Activated CD4-positive, alpha-beta memory T cell treated with anti-CD3 and anti-CD28 coated beads, Interleukin-2, amount 10 ng/mL, durations not matched to agents 7 days and 5 days (primary cell): ENCODE measurements at regions of chr3 and their contacts with region 1.

Region 1: DNA sequence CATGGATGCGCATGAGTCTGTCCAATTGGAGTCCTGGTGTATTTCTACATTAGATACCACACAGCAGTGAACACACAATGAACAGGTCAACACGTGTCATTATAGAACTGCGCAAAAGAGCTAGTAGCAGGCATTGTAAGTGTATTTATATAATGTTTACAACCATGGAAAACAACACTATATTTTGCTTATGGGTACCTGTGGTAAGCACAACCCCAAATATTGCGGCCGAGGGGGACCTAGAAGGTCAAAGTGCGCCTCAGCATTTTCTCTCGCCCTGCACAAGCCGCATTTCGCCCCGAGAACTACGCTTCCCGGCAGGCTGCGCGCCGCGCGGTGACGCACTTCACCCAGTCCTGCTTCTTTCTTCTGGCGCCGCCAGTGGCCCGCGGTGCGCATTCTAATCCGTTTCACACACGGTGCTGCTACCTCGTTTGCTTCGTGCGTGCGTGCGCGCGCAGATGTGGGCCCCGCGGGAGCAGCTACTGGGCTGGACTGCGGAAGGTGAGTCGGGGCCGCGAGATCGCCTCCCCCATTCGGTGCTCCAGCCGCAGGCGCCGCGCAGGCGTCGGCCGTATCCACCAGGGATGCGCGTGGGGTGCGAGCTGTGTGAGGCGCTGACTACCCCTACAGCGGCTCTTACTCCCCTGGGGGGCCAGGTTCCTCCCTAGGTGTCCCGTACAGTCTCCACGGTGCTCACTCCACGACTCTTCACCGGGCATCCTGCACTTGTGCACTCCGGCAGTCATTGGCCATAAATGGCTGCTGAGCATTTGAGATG is at the start of gene ZNF589:
- DNase-seq: peak; percentile 96
- H3K4me3 Mint-ChIP-seq: peak within 1 kb of the TSS; percentile 84
- H3K27ac Mint-ChIP-seq: peak within 1 kb of the TSS; percentile 90
- H3K4me1 Mint-ChIP-seq: peaks cover 36% of the 10 kb centered on the region
- H3K27me3 Mint-ChIP-seq: no peaks in the 10 kb centered on the region
- total RNA-seq, gene ZNF589: 38.1 to 38.6 TPM

Region 2: DNA sequence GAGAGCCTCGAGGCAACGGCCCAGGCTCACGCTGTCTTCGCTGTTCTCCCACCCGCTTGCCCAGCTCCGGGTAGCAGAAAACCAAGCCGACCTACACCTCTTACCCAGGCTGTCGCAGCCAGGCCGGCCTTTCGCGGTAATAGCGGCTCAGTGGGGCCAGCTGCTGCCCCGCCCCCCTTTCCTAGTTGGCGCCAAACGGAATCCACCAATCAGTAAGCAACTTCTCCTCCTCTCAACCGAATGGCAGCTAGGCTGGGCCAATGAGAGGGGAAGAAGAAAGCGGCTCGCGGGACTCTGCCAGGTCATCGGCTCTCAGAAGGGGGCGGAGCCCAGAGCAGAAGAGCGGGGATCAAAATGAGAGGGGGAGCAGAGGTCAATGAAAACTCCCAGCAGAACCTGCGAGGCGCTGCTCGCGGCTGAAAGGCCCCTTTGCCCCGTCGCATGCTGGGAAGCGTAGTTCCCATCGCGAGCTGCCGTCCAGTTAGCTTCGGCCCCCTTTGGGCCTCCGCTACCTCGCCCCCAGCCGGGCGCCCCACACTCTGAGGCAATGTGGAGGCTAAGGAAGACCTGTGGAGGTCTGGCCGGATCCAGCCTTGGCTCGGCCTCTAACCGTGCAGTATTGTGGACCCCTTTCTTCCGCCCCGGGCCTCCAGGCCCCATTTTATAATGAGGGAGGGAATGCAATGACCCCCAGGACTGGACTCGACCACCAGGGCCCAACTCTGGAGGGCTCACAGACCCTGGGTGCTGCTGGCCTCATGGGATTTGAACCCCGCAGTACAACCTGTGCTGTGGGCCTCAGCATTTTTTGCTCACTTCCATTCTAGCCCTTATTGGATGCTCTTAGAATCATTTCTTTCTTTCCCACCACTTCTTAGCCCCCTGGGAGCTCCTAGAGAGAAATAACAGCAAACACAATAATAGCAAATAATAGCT is 52.4 kb before region 1 on chr3 and contains the start of gene CDC25A:
- CTCF ChIA-PET with region 1: interaction called, 9 read pairs
- POLR2A ChIA-PET with region 1: interaction called, 20 read pairs
- DNase-seq: peak; percentile 97
- H3K4me3 Mint-ChIP-seq: peak within 1 kb of the TSS; percentile 97
- H3K27ac Mint-ChIP-seq: peak within 1 kb of the TSS; percentile 75
- H3K4me1 Mint-ChIP-seq: peaks cover 41% of the 10 kb centered on the region
- H3K27me3 Mint-ChIP-seq: no peaks in the 10 kb centered on the region
- total RNA-seq, gene CDC25A: 19.6 to 20.1 TPM

Region 3: DNA sequence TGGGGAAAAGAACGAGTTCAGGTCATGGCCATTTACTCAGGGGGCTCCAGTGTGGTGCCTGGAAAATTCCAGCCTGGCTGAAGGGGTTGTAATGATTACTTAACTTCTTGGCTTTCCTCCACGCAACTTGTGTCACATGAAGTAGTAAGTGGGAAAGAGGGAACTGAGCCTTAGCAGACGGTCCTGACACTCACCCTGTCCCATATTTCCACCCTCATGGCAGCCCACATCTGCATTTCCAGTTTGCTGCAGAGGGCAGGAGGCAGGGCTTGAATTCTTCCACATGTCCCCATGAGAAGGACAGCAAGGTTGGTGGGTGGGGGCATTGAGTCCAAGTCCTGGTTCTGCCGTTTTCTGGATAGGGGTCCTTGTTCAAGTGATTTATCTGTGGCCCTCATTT is 25.4 kb before region 1 on chr3:
- CTCF ChIA-PET with region 1: no interaction called
- POLR2A ChIA-PET with region 1: no interaction called
- DNase-seq: no peak
- H3K4me3 Mint-ChIP-seq: no peak overlapping the region
- H3K27ac Mint-ChIP-seq: no peak overlapping the region
- H3K4me1 Mint-ChIP-seq: no peaks in the 10 kb centered on the region
- H3K27me3 Mint-ChIP-seq: no peaks in the 10 kb centered on the region

Region 4: GRCh38 chr3:48268381-48269183 is 27.7 kb after region 1 on chr3:
- CTCF ChIA-PET with region 1: interaction called, 16 read pairs
- POLR2A ChIA-PET with region 1: interaction called, 28 read pairs
- DNase-seq: peak; percentile 85
- H3K4me3 Mint-ChIP-seq: peak overlapping the region; percentile 45
- H3K27ac Mint-ChIP-seq: peak overlapping the region; percentile 89
- H3K4me1 Mint-ChIP-seq: peaks cover 32% of the 10 kb centered on the region
- H3K27me3 Mint-ChIP-seq: no peaks in the 10 kb centered on the region

Region 5: GRCh38 chr3:48428830-48429316 is 188.0 kb after region 1 on chr3:
- CTCF ChIA-PET with region 1: no interaction called
- POLR2A ChIA-PET with region 1: no interaction called
- DNase-seq: no peak
- H3K4me3 Mint-ChIP-seq: no peak overlapping the region
- H3K27ac Mint-ChIP-seq: no peak overlapping the region
- H3K4me1 Mint-ChIP-seq: peaks cover 16% of the 10 kb centered on the region
- H3K27me3 Mint-ChIP-seq: peaks cover 18% of the 10 kb centered on the region